Left cardiac atrium (tissue), 4 donors: ENCODE measurements at regions of chr6 and their contacts with region 1.

Region 1: DNA sequence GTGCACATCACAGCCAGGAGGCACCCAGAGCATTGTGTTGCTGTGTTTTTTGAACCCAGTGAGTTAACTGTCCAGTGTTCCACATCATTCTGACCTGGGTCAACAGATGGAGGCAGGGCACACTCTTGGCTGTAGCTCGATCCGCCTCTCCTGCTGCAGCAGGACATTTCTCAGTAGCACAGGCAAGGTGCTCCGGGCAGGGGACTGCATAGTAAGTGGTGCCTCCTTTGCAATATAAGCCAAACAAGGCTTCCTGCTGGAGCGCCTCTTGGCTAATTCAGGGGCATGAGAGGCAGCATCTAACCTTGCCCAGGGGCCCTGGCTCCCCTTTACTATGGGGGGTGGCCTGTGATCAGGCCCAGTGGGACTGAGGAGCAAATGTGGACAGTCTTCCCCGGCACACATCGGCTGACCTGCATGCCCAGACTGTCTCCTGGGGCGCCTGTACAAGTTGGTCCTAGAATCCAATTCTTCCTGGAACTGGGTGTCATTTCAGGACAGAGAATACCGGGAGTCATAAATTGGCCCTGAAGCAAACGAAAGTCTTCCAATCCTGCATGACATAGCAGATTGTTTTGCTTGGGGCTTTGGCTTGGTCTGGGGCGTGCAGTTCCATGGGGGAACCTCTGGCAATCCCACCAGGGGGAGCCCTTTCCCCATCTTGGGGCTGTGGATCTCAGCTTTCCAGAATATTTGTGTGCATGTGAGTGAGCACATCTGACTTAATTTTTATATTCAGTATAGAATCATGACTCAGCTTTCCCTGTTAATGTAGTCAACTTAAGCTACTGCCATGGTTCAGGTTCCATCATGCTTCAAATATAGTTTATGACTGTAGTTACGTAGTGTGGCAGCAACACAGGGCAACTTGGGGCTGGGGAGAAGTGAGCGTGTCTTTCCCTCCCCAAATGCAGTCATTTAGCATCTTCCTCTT is 56.0 kb upstream of the DDR1 start:
- DNase-seq: peak; percentile 87
- ATAC-seq: peak; percentile 93 to 95

Region 2: GRCh38 chr6:30742316-30743098 is 85.8 kb before region 1 on chr6 and contains the start of gene FLOT1:
- intact Hi-C with region 1: loop called (anchors 5 to 10 kb)
- DNase-seq: peak; percentile 98
- ATAC-seq: peak; percentile 89
- total RNA-seq, gene FLOT1: 170 to 179 TPM

Region 3: GRCh38 chr6:30877419-30878371 is 49.4 kb after region 1 on chr6:
- intact Hi-C with region 1: loop called (anchors 1 to 2 kb)
- DNase-seq: peak; percentile 93
- ATAC-seq: peak; percentile 86 to 88

Region 4: DNA sequence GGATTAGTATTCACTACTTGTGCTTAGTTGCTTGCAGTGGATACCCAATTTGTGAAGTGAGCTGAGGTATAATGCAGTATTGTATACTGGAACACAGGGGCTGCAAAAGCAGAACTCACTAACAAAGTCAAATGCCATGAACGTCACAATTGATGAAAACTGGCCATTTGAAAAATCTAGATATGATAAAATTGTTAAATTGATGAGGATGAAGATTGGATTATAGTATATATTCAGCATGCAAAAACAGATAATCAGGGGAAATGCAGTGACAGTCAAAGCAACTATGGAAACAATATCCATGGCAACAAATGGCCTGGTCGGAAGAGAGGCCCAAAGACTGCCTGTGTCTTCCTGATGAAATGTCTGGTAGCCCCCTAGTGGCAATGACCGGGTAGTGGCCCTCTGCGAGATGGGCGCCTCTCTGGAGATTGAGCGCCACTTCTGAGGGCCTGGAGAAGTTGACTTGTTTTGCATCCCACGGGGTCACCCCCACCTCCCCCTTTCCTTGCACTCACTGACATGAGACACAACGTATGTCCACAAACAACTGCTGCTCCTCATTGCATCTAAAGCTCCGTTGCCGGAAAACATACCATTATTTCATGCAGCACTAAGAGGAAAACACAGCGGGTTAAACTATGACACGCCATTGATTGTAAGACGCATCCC is 240.5 kb after region 1 on chr6:
- intact Hi-C with region 1: loop called (anchors 5 to 10 kb)
- DNase-seq: peak; percentile 75
- ATAC-seq: peak; percentile 83 to 87

Region 5: DNA sequence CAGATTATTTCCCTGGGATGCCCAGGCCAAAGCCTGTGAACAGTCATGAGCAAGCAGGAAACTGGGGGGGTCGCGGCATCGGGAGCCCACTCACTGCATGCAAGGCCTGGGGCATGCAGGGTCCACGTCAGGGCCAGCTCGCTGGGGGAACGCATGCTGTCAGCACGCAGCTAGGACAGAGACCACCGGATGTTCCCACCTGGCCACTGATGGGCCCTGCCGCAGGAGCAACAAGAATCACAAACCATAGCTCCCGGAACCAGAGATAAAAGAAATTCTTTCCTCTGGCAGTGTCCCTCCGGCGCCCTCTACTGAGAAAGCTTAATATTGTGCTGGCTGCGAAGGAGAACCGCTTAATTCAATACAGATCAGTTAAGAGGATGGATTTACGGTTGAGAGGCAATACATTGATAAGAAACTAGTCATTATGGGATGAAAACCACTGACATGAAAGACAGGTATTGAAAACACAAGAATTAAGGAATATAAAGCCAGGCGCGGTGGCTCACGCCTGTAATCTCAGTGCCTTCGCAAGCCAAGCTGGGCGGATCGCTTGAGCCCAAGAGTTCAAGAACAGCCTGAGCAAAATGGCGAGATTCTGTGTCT is 251.5 kb after region 1 on chr6:
- intact Hi-C with region 1: loop called (anchors 5 to 10 kb)
- DNase-seq: peak; percentile 65
- ATAC-seq: peak; percentile 70 to 79

Region 6: DNA sequence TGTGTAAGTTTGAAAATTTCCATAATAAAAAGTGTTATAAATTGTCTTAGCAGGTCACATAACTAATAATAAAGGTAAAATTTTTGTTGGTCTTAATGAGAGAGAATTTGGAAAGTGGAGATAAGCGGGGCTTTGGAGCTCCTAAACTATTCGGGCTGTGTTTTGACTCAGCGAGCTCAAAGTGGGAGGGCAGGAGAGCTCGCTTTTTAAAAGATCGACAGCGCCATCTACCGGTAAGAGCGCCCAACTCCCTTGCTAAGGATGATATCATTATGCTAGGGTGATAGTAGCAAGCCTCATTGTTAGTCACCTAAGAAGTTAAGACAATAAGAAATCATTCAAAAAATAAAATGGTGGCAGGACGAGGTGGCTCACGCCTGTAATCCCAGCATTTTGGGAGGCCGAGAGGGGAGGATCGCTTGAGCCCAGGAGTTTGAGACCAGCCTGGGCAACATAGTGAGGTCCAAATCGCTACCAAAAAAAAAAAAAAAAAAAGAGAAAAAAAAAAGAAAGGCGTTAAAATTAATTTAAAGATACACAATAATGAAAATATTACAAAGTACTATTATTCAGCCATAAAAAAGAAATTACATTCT is 259.3 kb after region 1 on chr6:
- intact Hi-C with region 1: loop called in 1 of 2 experiments (anchors 5 kb)
- DNase-seq: peak; percentile 88
- ATAC-seq: peak; percentile 93 to 97